CD4-positive, alpha-beta memory T cell (primary cell): ENCODE measurements at regions of chr6 and their contacts with region 1.

Region 1: GRCh38 chr6:30556066-30556905 is at the start of gene GNL1:
- DNase-seq: peak; percentile 98 to 99 (median 99)
- H3K4me3 ChIP-seq: peak within 1 kb of the TSS; percentile 79 to 99
- H3K4me3 Mint-ChIP-seq: peak within 1 kb of the TSS; percentile 97 to 100 (median 99)
- H3K27ac ChIP-seq: peak within 1 kb of the TSS; percentile 96
- H3K27ac Mint-ChIP-seq: peak within 1 kb of the TSS; percentile 97 to 100 (median 100)
- H3K4me1 ChIP-seq: peaks cover 30% of the 10 kb centered on the region
- H3K4me1 Mint-ChIP-seq: peaks cover 26 to 65% (median 38%) of the 10 kb centered on the region in 4 donors
- H3K27me3 ChIP-seq: no peaks in the 10 kb centered on the region
- H3K27me3 Mint-ChIP-seq: peaks cover 0 to 1% of the 10 kb centered on the region in 2 donors
- total RNA-seq, gene GNL1: 83.4 to 83.9 TPM

Region 2: DNA sequence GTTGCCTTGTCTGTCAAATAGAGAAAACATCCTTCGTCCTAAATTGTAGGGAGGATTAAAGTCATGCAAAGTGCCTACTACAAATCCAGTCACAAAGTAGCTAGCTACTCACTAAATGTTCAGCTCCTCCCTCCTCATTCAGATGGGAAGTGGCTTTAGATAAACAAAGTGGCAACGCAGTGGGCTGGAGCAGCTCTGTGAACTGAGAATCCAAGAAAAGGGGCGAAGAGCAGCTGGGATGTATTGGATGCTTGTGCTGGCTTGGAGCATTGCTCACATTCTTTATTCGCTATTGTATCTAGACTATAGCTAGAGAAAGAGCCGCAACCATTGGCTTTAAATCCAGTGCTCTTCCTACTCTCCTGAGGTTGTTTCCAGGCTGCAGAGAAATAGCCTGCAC is 889.1 kb before region 1 on chr6:
- CTCF ChIA-PET with region 1: no interaction called
- POLR2A ChIA-PET with region 1: no interaction called
- intact Hi-C with region 1: no loop called
- DNase-seq: no peak
- H3K4me3 ChIP-seq: no peak overlapping the region
- H3K4me3 Mint-ChIP-seq: no peak overlapping the region
- H3K27ac ChIP-seq: no peak overlapping the region
- H3K27ac Mint-ChIP-seq: no peak overlapping the region
- H3K4me1 ChIP-seq: no peaks in the 10 kb centered on the region
- H3K4me1 Mint-ChIP-seq: no peaks in the 10 kb centered on the region
- H3K27me3 ChIP-seq: no peaks in the 10 kb centered on the region
- H3K27me3 Mint-ChIP-seq: peaks cover 19 to 27% of the 10 kb centered on the region in 2 donors

Region 3: DNA sequence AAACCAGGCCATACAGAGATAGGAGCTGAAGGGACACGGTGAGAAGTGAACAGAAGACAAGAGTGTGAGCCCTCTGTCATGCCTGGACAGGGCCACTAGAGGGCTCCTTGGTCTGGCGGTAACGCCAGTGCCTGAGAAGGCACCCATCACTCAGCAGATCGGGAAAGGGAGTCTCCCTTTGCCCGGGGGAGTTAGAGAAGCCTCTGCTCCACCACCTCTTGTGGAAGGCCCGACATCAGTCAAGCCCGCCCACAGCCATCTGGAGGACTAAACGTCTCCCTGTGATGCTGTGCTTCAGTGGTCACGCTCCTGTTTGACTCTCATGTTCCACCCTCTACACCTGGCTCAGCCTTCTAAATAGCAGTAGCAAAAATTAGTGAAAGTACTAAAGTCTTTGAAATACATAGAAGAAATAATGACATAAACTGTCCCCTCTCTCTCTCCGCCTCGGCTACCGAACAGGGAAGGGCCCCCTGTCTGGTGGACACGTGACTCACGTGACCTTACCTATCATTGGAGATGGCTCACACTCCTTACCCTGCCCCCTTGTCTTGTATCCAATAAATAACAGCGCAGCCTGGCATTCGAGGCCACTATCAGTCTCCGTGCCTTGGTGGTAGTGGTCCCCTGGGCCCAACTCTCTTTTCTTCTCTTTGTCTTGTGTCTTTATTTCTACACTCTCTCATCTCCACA is 144.6 kb before region 1 on chr6:
- CTCF ChIA-PET with region 1: no interaction called
- POLR2A ChIA-PET with region 1: no interaction called
- intact Hi-C with region 1: no loop called
- DNase-seq: peak; percentile 47 to 61 (median 56)
- H3K4me3 ChIP-seq: no peak overlapping the region
- H3K4me3 Mint-ChIP-seq: peak overlapping the region in 6 of 8 donors; percentile 7 to 75 (median 33)
- H3K27ac ChIP-seq: no peak overlapping the region
- H3K27ac Mint-ChIP-seq: no peak overlapping the region
- H3K4me1 ChIP-seq: peaks cover 3% of the 10 kb centered on the region
- H3K4me1 Mint-ChIP-seq: peaks cover 3 to 12% (median 7%) of the 10 kb centered on the region in 4 donors
- H3K27me3 ChIP-seq: no peaks in the 10 kb centered on the region
- H3K27me3 Mint-ChIP-seq: peaks cover 29 to 45% of the 10 kb centered on the region in 2 donors

Region 4: DNA sequence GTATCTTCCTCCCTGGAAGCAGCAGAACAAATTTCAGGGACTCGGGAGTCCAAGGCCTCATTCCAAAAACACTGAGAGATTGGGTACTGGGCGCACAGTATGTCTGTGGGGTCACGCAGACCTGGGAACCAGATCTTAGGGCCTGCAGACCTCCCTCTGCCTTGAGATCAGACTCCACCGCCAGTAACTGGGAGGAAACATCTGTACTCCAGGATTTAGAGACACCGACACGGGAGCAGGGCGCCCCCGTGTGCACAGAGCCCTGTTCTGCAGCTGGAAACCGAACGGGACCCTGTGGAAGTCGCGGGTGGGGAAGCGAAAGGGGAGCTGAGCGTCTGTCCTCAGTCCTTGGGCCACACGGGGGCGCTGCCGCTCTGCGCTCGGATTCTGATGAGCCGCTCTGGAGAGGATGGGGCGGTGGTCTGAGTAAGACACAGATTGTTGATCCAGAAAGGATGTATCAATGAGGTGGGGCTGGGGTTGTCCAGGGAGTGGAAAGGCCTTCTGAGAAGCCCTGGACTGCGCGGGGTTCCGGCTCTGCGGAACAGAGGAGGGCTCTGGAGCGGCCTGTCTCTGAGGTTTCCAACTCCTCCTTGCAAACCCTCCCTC is 102.7 kb before region 1 on chr6:
- CTCF ChIA-PET with region 1: no interaction called
- POLR2A ChIA-PET with region 1: interaction called, 10 read pairs
- intact Hi-C with region 1: no loop called
- DNase-seq: peak; percentile 77 to 84 (median 81)
- H3K4me3 ChIP-seq: peak overlapping the region in 1 of 2 donors; percentile 28
- H3K4me3 Mint-ChIP-seq: peak overlapping the region; percentile 52 to 77 (median 62)
- H3K27ac ChIP-seq: no peak overlapping the region
- H3K27ac Mint-ChIP-seq: peak overlapping the region in 1 of 7 donors; percentile 17
- H3K4me1 ChIP-seq: peaks cover 47% of the 10 kb centered on the region
- H3K4me1 Mint-ChIP-seq: peaks cover 31 to 54% (median 43%) of the 10 kb centered on the region in 4 donors
- H3K27me3 ChIP-seq: peaks cover 80% of the 10 kb centered on the region
- H3K27me3 Mint-ChIP-seq: peaks cover 50 to 56% of the 10 kb centered on the region in 2 donors

Region 5: DNA sequence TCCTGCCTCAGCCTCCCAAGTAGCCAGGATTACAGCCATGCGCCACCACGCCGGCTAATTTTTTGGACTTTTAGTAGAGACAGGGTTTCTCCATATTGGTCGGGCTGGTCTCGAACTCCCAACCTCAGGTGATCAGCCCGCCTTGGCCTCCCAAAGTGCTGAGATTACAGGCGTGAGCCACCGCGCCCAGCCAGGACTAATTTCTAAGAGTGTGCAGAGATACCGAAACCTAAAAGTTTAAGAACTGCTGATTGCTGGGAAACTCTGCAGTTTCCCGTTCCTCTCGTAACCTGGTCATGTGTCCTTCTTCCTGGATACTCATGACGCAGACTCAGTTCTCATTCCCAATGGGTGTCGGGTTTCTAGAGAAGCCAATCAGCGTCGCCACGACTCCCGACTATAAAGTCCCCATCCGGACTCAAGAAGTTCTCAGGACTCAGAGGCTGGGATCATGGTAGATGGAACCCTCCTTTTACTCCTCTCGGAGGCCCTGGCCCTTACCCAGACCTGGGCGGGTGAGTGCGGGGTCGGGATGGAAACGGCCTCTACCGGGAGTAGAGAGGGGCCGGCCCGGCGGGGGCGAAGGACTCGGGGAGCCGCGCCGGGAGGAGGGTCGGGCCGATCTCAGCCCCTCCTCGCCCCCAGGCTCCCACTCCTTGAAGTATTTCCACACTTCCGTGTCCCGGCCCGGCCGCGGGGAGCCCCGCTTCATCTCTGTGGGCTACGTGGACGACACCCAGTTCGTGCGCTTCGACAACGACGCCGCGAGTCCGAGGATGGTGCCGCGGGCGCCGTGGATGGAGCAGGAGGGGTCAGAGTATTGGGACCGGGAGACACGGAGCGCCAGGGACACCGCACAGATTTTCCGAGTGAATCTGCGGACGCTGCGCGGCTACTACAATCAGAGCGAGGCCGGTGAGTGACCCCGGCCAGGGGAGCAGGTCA is 66.9 kb before region 1 on chr6 and contains the start of gene HLA-E:
- CTCF ChIA-PET with region 1: interaction called, 416 read pairs
- POLR2A ChIA-PET with region 1: interaction called, 48 read pairs
- intact Hi-C with region 1: loop called (anchors 1 kb)
- DNase-seq: peak; percentile 92 to 98 (median 96)
- H3K4me3 ChIP-seq: peak within 1 kb of the TSS; percentile 98 to 99
- H3K4me3 Mint-ChIP-seq: peak within 1 kb of the TSS; percentile 98 to 99 (median 99)
- H3K27ac ChIP-seq: peak within 1 kb of the TSS; percentile 95
- H3K27ac Mint-ChIP-seq: peak within 1 kb of the TSS; percentile 97 to 99 (median 99)
- H3K4me1 ChIP-seq: peaks cover 30% of the 10 kb centered on the region
- H3K4me1 Mint-ChIP-seq: peaks cover 28 to 60% (median 44%) of the 10 kb centered on the region in 4 donors
- H3K27me3 ChIP-seq: no peaks in the 10 kb centered on the region
- H3K27me3 Mint-ChIP-seq: no peaks in the 10 kb centered on the region
- total RNA-seq, gene HLA-E: 1,097 to 1,122 TPM

Region 6: GRCh38 chr6:30571075-30571768 is 14.9 kb after region 1 on chr6 and contains the start of gene ABCF1:
- CTCF ChIA-PET with region 1: interaction called, 4 read pairs
- POLR2A ChIA-PET with region 1: interaction called, 61 read pairs
- intact Hi-C with region 1: loop called (anchors 1 kb)
- DNase-seq: peak; percentile 98 to 100 (median 99)
- H3K4me3 ChIP-seq: peak within 1 kb of the TSS; percentile 88 to 94
- H3K4me3 Mint-ChIP-seq: peak within 1 kb of the TSS; percentile 97 to 100 (median 100)
- H3K27ac ChIP-seq: peak within 1 kb of the TSS; percentile 95
- H3K27ac Mint-ChIP-seq: peak within 1 kb of the TSS; percentile 97 to 100 (median 99)
- H3K4me1 ChIP-seq: peaks cover 45% of the 10 kb centered on the region
- H3K4me1 Mint-ChIP-seq: peaks cover 48 to 65% (median 54%) of the 10 kb centered on the region in 4 donors
- H3K27me3 ChIP-seq: no peaks in the 10 kb centered on the region
- H3K27me3 Mint-ChIP-seq: no peaks in the 10 kb centered on the region
- total RNA-seq, gene ABCF1: 60.8 to 66.8 TPM

Region 7: DNA sequence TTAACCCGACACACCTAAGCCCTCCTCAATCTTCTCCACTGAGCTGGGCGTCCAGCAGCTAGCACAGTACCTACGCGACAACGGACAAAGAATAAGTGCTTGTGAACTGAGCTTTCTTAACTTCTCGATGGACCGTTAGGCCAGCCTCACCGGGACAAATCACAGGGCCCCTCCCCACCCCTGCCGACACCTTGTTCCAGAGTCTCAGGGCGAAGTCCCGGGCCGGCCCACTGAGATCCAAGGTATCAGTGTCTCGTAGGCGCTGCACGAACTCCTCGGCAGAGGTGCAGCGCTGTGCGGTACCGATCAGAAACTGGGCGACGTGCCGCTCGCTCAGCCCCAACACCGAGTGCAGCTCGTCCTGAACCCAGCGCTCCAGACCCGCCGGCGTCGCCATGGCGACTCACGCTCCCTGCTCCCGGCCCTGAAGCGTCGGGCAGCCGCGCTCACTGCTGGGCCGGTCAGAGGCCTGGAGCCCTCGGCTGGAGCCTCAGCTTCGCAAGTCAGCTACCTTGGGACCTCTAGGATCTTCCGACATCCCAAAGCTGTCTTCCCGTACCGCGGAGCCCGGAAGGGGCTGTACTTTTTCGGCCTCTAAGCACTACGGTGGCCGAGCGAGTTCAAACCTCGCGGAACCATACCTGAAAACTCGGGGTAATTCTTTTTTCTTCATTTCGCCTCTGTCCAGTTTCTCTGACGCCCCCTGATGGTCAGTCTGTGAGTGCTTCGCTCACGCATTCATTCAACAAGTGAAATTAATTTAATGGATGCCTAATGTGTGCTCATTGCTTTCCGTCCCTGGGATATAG is 116.4 kb after region 1 on chr6 and contains the start of gene DHX16:
- CTCF ChIA-PET with region 1: interaction called, 3 read pairs
- POLR2A ChIA-PET with region 1: interaction called, 4 read pairs
- intact Hi-C with region 1: loop called (anchors 1 kb)
- DNase-seq: peak; percentile 84 to 89 (median 87)
- H3K4me3 ChIP-seq: peak within 1 kb of the TSS; percentile 89 to 95
- H3K4me3 Mint-ChIP-seq: peak within 1 kb of the TSS; percentile 80 to 94 (median 90)
- H3K27ac ChIP-seq: peak within 1 kb of the TSS; percentile 77
- H3K27ac Mint-ChIP-seq: peak within 1 kb of the TSS; percentile 69 to 97 (median 94)
- H3K4me1 ChIP-seq: peaks cover 20% of the 10 kb centered on the region
- H3K4me1 Mint-ChIP-seq: peaks cover 19 to 51% (median 35%) of the 10 kb centered on the region in 4 donors
- H3K27me3 ChIP-seq: no peaks in the 10 kb centered on the region
- H3K27me3 Mint-ChIP-seq: no peaks in the 10 kb centered on the region
- total RNA-seq, gene DHX16: 53.4 to 54.6 TPM